ENCODE measurements at regions of chr18 and their contacts with region 1.

Region 1: DNA sequence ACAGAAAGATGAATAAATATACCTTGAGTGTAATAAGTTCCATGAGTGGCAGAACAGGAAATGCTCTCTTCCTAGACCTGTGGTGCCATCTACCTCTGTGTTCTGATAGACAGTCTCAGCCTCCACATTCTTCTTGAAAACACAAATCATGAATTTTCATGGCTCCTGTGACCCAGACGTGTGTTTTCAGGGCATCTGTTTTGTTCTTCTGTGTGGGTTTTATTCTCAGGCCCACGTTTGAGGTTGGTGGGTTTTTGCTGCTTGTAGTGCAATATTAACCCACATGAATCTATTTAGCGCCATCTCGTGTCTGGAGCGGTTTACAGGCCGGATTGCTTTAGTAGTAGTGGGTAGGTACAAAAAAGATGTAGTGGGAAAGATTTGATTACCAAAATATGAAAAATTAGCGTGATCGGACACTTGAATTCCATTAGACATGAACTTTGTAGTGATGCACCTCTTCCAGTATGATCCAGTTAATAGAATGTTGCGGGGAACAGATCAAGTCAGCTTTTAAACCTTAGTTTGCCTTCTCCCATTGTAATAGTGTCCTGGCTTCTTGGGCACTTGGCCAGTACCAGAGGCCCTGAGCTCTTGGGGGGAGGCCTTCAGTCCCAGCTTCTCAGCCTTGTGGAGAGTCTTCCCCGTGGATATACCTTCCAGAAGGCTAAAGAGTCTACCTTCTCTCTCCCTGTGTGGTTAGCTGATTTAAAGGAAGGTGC is 256.5 kb downstream of the TPGS2 start:
- DNase-seq: peak in 3 of 6 donors; percentile 21 to 51 (median 28)
- ATAC-seq: peak; percentile 71 to 90 (median 86)
- H3K4me3 ChIP-seq: no peak overlapping the region
- H3K27ac ChIP-seq: no peak overlapping the region
- H3K4me1 ChIP-seq: no peaks in the 10 kb centered on the region
- H3K27me3 ChIP-seq: no peaks in the 10 kb centered on the region
- CTCF ChIP-seq: peak in 3 of 4 donors; percentile 20 to 33 (median 31)

Region 2: DNA sequence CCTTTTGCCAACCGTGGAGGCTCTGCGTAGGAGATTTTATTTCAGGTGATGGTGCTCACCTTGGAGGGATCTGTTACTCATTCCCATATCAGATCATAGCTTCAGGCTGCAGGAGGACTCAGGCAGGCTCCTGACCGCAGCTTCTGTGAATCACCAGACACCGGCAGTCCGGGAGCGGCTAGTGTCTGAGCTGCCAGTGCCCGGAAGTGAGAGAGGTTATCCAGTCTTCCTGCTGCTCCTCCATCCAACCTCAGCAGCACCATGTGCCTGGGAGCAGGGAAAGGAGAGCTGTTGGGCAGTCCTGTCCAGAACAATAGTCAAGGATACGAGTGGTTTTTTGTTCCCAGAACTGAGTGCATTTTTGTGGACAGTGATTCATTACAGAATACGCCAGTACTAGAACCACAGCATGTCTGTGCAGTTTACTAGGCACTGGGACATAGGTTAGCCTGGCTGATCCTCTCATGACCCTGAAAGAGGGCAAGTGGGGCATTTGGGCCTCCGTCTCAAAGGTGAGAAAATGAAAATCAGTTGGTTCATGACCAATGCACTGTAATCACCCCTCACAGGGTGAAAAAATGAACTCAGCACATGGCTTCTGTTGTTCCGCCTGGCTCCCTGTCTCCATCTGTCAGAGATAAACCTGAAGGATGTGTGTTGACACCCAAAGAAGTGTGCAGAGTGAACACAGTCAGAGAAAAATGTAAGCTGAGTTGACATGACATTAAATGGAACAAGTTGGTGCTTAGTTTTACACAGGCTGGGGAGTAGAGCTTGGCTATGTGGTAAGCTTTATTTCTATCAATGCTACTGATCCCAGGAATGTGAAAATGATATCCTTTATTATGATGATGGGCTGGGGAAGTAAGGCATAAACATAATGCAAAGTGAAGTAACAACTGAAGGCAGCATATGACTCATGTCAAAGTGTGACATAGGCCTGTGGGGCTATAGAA is 262.6 kb before region 1 on chr18:
- intact Hi-C with region 1: loop called in 1 of 3 experiments (anchors 10 kb)
- DNase-seq: peak in 1 of 6 donors; percentile 23
- ATAC-seq: peak in 2 of 4 donors; percentile 48 to 63
- H3K4me3 ChIP-seq: no peak overlapping the region
- H3K27ac ChIP-seq: no peak overlapping the region
- H3K4me1 ChIP-seq: no peaks in the 10 kb centered on the region
- H3K27me3 ChIP-seq: no peaks in the 10 kb centered on the region
- CTCF ChIP-seq: no peak

Region 3: DNA sequence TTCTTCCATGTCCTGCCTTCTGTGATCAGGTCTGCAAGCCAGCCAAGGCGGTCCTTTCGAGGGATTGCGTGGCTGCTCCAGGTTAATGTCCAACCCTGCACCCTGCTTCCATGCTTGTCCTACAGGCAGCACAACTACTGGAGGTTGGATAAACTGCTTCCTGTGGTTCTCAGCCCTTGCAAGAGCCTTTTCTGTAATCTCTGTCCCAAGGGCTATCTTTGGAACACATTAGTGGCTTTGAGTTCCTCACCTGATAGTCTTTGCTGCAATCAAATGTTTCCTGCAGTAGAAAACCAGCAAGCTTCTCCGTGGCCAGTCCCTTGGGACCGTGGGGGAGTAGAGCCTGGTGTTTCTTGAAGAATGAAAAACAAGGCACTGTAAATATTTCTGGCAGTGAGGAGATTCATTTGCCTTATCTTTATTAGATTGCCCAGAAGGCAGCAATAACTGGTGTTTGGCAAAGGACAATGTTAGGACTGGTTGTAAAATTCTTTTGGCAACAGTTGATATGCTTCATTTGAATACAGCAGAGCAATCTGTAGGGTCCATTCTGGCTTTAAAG is 60.4 kb before region 1 on chr18:
- intact Hi-C with region 1: no loop called
- DNase-seq: no peak
- ATAC-seq: peak in 3 of 4 donors; percentile 14 to 53 (median 31)
- H3K4me3 ChIP-seq: no peak overlapping the region
- H3K27ac ChIP-seq: no peak overlapping the region
- H3K4me1 ChIP-seq: peaks cover 0 to 3% (median 0%) of the 10 kb centered on the region in 3 donors
- H3K27me3 ChIP-seq: no peaks in the 10 kb centered on the region
- CTCF ChIP-seq: no peak

Region 4: DNA sequence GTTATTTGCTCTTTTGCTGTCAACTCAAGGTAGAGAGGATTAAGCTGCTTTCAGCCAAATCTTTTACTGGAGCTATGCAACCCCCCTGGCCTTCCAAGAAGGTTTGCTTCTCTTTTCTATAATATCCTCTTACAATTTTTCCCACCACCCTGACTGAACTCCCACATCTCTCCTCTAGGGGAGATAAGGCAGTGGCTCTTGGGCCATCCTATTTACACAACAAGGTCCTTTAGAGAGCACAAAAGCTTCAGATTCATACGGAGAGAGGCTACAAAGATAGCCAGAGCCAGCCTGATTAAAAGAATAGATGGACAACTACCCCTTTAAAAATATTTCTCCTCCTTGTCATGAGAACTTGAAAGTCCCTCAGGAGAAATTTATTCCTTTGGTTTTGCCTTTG is 160.9 kb after region 1 on chr18:
- intact Hi-C with region 1: no loop called
- DNase-seq: no peak
- ATAC-seq: no peak
- H3K4me3 ChIP-seq: no peak overlapping the region
- H3K27ac ChIP-seq: no peak overlapping the region
- H3K4me1 ChIP-seq: no peaks in the 10 kb centered on the region
- H3K27me3 ChIP-seq: no peaks in the 10 kb centered on the region
- CTCF ChIP-seq: no peak

Region 5: GRCh38 chr18:37055137-37055802 is 483.0 kb after region 1 on chr18:
- intact Hi-C with region 1: no loop called
- DNase-seq: no peak
- ATAC-seq: no peak
- H3K4me3 ChIP-seq: no peak overlapping the region
- H3K27ac ChIP-seq: no peak overlapping the region
- H3K4me1 ChIP-seq: no peaks in the 10 kb centered on the region
- H3K27me3 ChIP-seq: no peaks in the 10 kb centered on the region
- CTCF ChIP-seq: no peak

Region 6: DNA sequence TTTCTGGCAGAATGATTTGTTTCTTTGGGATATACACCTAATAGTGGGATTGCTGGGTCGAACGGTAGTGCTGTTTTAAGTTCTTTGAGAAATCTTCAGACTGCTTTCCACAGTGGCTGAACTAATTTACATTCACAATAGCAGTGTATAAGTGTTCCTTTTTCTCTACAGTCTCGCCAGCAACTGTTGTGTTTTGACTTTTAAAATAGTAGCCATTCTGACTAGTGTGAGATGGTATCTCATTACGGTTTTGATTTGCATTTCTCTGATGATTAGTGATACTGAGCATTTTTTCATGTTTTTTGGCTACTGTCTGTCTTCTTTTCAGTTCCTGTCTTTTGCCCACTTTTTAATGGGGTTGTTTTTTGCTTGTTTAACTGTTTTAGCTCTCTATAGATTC is 562.9 kb after region 1 on chr18:
- intact Hi-C with region 1: no loop called
- DNase-seq: no peak
- ATAC-seq: no peak
- H3K4me3 ChIP-seq: no peak overlapping the region
- H3K27ac ChIP-seq: no peak overlapping the region
- H3K4me1 ChIP-seq: no peaks in the 10 kb centered on the region
- H3K27me3 ChIP-seq: no peaks in the 10 kb centered on the region
- CTCF ChIP-seq: no peak